ENCODE measurements at regions of chr19 and their contacts with region 1.

Region 1: GRCh38 chr19:11881151-11881800 is 6.3 kb upstream of the ZNF69 start:
- DNase-seq: peak in 1 of 2 donors; percentile 16
- ATAC-seq: peak; percentile 57 to 89 (median 66)
- H3K4me3 ChIP-seq: no peak overlapping the region
- H3K27ac ChIP-seq: no peak overlapping the region
- H3K4me1 ChIP-seq: peaks cover 2% of the 10 kb centered on the region
- H3K27me3 ChIP-seq: no peaks in the 10 kb centered on the region
- CTCF ChIP-seq: peak; percentile 68

Region 2: GRCh38 chr19:11798391-11799330 is 82.6 kb before region 1 on chr19 and contains the start of gene ZNF491:
- intact Hi-C with region 1: loop called in 1 of 2 experiments (anchors 2 kb)
- DNase-seq: peak; percentile 91 to 94
- ATAC-seq: peak; percentile 98 to 99 (median 98)
- H3K4me3 ChIP-seq: peak within 1 kb of the TSS; percentile 93
- H3K27ac ChIP-seq: peak within 1 kb of the TSS; percentile 87
- H3K4me1 ChIP-seq: peaks cover 14% of the 10 kb centered on the region
- H3K27me3 ChIP-seq: no peaks in the 10 kb centered on the region
- CTCF ChIP-seq: peak; percentile 14
- total RNA-seq, gene ZNF491: 0.66 to 1.9 (median 1.1) TPM

Region 3: DNA sequence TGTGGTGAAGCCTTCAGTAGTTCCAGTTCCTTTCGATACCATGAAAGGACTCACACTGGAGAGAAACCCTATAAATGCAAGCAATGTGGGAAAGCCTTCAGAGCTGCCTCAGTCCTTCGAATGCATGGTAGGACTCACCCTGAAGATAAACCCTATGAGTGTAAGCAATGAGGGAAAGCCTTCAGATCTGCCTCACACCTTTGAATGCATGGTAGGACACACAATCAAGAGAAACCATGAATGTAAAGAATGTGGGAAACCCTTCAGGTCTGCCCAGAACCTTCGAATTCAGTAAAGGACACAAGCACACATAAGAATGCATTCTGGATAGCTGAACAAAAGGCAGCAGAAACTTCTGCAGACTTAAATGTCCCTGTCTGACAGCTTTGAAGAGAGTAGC is 24.7 kb after region 1 on chr19:
- intact Hi-C with region 1: no loop called
- DNase-seq: no peak
- ATAC-seq: no peak
- H3K4me3 ChIP-seq: no peak overlapping the region
- H3K27ac ChIP-seq: no peak overlapping the region
- H3K4me1 ChIP-seq: no peaks in the 10 kb centered on the region
- H3K27me3 ChIP-seq: no peaks in the 10 kb centered on the region
- CTCF ChIP-seq: no peak

Measured in psoas muscle (tissue), 8 donors.